Gastrocnemius medialis (tissue), 4 donors: ENCODE measurements at regions of chr16 and their contacts with region 1.

Region 1: GRCh38 chr16:75432828-75433731 is at the start of gene CFDP1:
- DNase-seq: peak; percentile 93 to 94
- ATAC-seq: peak; percentile 93 to 96
- H3K4me3 ChIP-seq: peak within 1 kb of the TSS; percentile 88 to 100 (median 95)
- H3K27ac ChIP-seq: peak within 1 kb of the TSS; percentile 80 to 99 (median 96)
- H3K4me1 ChIP-seq: peaks cover 15 to 17% of the 10 kb centered on the region in 2 donors
- H3K27me3 ChIP-seq: no peaks in the 10 kb centered on the region
- CTCF ChIP-seq: peak in 2 of 5 experiments; percentile 25 to 28
- POLR2A ChIP-seq: peak; percentile 71 to 78
- total RNA-seq, gene CFDP1: 20.4 to 28.6 (median 24.2) TPM

Region 2: GRCh38 chr16:74984535-74985296 is 448.4 kb before region 1 on chr16 and contains the start of gene WDR59:
- in situ Hi-C with region 1: no loop called
- intact Hi-C with region 1: loop called (anchors 1 kb)
- DNase-seq: peak; percentile 100
- ATAC-seq: peak; percentile 99 to 100
- H3K4me3 ChIP-seq: peak within 1 kb of the TSS; percentile 84 to 100 (median 97)
- H3K27ac ChIP-seq: peak within 1 kb of the TSS; percentile 84 to 96 (median 92)
- H3K4me1 ChIP-seq: peaks cover 0 to 17% of the 10 kb centered on the region in 2 donors
- H3K27me3 ChIP-seq: no peaks in the 10 kb centered on the region
- CTCF ChIP-seq: no peak
- POLR2A ChIP-seq: peak; percentile 68 to 77
- total RNA-seq, gene WDR59: 12.9 to 31.3 (median 19.5) TPM

Region 3: GRCh38 chr16:75471723-75472633 is 38.9 kb after region 1 on chr16:
- in situ Hi-C with region 1: no loop called
- intact Hi-C with region 1: no loop called
- DNase-seq: peak; percentile 37 to 39
- ATAC-seq: peak; percentile 97 to 99
- H3K4me3 ChIP-seq: no peak overlapping the region
- H3K27ac ChIP-seq: no peak overlapping the region
- H3K4me1 ChIP-seq: no peaks in the 10 kb centered on the region
- H3K27me3 ChIP-seq: no peaks in the 10 kb centered on the region
- CTCF ChIP-seq: peak; percentile 58 to 76 (median 72)
- POLR2A ChIP-seq: no peak

Region 4: GRCh38 chr16:75550211-75550662 is 117.2 kb after region 1 on chr16:
- in situ Hi-C with region 1: no loop called
- intact Hi-C with region 1: no loop called
- DNase-seq: no peak
- ATAC-seq: peak; percentile 57 to 59
- H3K4me3 ChIP-seq: peak overlapping the region in 1 of 4 donors; percentile 11
- H3K27ac ChIP-seq: peak overlapping the region in 3 of 4 donors; percentile 56 to 67 (median 67)
- H3K4me1 ChIP-seq: peaks cover 4 to 9% of the 10 kb centered on the region in 2 donors
- H3K27me3 ChIP-seq: no peaks in the 10 kb centered on the region
- CTCF ChIP-seq: peak in 3 of 5 experiments; percentile 9 to 37 (median 30)
- POLR2A ChIP-seq: no peak